ENCODE measurements at regions of chr5 and their contacts with region 1.

Region 1: DNA sequence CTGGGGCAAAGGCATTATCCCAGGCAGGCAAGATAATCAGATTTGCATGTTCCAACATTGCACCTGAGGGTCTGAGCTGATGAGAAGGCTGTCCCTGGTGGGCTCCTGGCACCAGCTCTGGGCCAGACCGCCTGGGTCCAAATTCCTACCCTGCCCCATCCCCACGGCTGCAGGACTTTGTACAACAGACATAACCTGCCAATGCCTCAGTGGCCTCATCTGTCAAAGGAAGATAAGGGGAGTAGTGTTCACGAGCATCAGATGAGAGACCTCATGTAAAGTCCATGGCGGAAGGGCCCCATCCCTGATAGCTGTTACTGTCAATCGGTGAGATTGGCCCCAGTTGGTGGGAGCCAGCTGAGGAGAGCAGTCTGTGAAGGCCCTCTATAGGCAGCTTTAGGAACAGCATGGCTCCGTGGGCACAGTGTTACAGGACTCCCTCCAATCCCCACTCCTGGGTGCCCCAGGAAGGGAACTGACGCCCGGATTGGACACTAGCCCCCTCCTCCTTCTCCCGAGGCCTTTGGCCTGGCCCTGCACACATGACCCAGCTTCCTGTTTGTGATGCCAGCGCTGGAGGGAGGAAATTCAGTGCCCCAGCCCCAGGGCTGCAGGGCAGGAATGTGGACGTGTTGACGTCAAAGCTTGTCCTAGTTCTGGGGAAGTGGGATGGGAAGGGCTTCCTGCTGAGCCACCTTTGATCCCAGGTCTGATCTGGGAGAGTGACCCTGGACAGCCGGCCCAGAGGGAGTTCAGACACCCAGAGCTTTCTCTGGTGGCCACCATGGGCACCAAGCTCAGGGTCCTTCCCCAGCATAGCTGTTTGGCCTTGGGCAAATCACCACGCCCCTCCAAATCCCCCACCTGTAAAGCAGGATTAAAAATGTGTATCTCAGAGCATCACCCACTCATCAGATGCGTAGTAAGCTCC is 56.2 kb downstream of the DUSP1 start:
- DNase-seq: peak; percentile 98 to 99
- ATAC-seq: peak; percentile 82 to 89
- H3K4me3 ChIP-seq: no peak overlapping the region
- H3K27ac ChIP-seq: peak overlapping the region; percentile 98
- H3K4me1 ChIP-seq: peaks cover 45% of the 10 kb centered on the region
- CTCF ChIP-seq: peak; percentile 63
- EP300 ChIP-seq: peak; percentile 99 to 100
- POLR2A ChIP-seq: no peak
- RAD21 ChIP-seq: peak; percentile 59 to 60

Region 2: DNA sequence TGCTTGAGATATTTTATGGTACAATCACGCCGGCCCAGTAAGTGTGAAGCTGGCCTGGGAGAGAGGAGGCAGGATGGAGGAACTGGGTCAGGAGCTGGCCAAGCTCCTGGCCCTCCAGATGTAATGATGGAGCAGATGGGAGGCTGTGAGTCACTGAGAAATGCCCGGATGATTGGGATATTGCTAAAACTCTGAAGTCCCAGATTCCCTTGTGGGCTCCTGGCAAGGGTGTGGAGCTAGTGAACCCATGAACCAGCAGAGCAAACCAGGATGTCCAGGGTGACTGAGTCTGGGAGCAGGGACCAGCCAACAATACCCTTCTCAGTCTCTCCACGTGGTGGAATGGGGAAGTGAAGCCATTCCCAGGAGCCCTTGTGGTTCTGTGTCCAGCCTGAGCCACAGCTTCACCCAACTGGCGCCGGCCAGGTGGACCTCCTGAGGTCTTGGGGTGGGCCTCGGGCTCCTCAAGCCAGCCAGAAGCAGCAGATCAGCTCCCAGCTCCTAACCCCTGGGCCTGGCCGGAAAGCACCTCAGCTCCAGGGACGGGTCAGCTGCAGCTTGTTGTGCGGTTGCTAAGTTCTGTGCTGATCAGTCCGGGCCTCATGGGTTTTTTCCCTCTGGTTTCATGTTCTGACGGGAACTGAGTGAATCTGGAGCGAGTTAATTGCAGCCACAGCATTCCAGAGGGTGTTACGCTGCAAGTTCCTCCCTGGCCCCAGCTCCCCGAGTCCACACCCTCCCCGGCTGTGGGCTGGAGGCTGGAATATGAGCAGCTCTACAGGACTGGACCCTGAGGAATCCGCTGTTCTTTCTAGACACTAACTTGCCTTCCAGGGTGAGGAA is 18.6 kb after region 1 on chr5:
- CTCF ChIA-PET with region 1: interaction called, 34 read pairs
- POLR2A ChIA-PET with region 1: no interaction called
- DNase-seq: no peak
- ATAC-seq: peak; percentile 20 to 61; a peak in 4 of 6 replicates
- H3K4me3 ChIP-seq: no peak overlapping the region
- H3K27ac ChIP-seq: peak overlapping the region; percentile 45 to 78; a peak in 5 of 6 replicates
- H3K4me1 ChIP-seq: peaks cover 30% of the 10 kb centered on the region
- CTCF ChIP-seq: no peak
- EP300 ChIP-seq: no peak
- POLR2A ChIP-seq: no peak
- RAD21 ChIP-seq: no peak

Region 3: DNA sequence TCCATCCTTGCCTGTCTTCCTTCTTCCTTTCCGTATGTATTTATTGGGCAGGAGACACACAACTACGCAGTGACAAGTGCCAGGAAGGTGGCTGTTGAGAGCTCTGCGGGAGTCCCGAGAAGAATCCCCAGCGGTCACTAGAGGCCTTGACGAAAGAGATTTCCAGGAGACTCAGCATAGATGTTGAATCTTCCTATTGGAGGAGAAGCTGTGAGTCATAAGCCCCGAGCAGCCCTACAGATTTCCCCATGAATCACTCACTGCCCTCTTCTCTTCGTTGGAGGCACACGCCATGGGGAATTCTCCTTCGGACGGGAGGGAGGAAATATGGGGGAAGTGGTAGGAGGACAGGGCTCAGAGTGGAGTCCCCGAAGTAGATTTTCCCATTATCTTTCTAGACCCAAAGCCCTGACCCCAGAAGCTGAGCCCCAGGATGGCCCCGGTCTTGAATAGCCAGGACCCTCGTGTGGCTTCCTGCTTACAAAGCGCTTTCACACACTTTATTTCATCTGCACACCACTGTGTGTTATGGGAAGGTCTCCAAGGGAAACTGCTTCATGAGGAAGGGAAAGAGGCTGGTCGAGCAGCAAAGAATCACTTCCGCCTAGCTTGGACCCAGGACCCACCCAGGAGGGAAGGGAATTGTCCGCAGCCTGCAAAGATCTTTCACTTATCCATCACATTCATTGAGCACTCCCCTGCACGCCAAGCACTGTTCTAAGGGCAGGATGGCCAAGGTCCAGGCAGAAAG is 43.5 kb after region 1 on chr5:
- CTCF ChIA-PET with region 1: interaction called, 68 read pairs
- POLR2A ChIA-PET with region 1: interaction called, 6 read pairs
- DNase-seq: peak; percentile 91 to 95
- ATAC-seq: peak; percentile 91 to 93
- H3K4me3 ChIP-seq: no peak overlapping the region
- H3K27ac ChIP-seq: peak overlapping the region; percentile 79 to 88
- H3K4me1 ChIP-seq: peaks cover 17% of the 10 kb centered on the region
- CTCF ChIP-seq: no peak
- EP300 ChIP-seq: no peak
- POLR2A ChIP-seq: no peak
- RAD21 ChIP-seq: no peak; a peak in 1 of 5 replicates

Region 4: DNA sequence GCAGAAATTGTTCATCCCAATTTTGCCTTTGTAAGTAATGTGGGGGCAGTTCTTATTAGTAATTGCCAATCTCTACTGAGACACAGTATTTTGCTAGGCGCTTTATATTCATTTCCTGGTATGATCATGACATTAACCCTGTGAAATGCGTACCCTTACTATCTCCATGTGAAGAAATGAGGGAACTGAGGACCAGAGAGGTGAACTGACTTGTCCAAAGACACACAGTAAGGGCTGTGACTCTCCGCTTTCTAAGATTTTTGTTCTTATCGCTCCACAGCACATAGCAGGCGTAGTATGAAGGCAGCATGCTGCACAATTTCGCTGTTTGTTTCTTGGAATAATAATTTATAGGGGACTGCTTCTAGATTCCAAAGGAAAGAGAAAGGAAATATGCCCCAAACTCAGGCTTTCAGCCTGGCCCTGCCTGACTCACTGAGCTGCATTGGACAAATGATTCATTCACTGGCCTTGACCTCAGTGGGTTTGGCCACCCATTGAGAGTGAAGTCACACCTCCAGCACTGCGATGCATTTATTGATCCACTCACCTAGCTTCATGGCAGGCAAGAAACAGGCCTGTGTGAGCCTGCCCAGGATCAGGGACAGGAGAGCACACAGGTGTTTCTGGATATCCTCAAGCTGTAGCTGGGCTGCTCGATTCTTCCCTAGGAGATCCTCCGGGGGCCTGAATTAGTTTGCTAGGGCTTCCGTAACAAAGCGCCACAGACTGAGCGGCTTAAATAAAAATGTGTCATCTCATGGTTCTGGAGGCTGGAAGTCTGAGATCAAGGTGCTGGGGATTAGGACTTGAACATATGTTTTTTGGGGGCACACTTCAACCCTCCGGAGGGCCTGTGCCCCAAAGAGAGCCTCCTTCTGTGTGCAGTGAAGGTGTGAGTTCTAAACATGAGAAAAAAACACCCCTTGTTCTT is 63.4 kb after region 1 on chr5:
- CTCF ChIA-PET with region 1: interaction called, 38 read pairs
- POLR2A ChIA-PET with region 1: interaction called, 3 read pairs
- DNase-seq: peak in 1 of 2 experiments; percentile 82
- ATAC-seq: peak; percentile 42 to 54
- H3K4me3 ChIP-seq: peak overlapping the region; percentile 16; the same call in 1 of the 3 replicates
- H3K27ac ChIP-seq: peak overlapping the region; percentile 97 to 100
- H3K4me1 ChIP-seq: peaks cover 93% of the 10 kb centered on the region
- CTCF ChIP-seq: no peak
- EP300 ChIP-seq: no peak
- POLR2A ChIP-seq: no peak
- RAD21 ChIP-seq: peak in 1 of 2 experiments; percentile 15; a peak in 1 of 5 replicates

Region 5: GRCh38 chr5:172897481-172898217 is 182.9 kb after region 1 on chr5:
- CTCF ChIA-PET with region 1: interaction called, 55 read pairs
- POLR2A ChIA-PET with region 1: interaction called, 7 read pairs
- DNase-seq: peak; percentile 90 to 96
- ATAC-seq: peak; percentile 55 to 73
- H3K4me3 ChIP-seq: 0 out of 3 replicates have a peak overlapping the region, but pooled peaks have one; percentile 10
- H3K27ac ChIP-seq: peak overlapping the region; percentile 99 to 100
- H3K4me1 ChIP-seq: peaks cover 87% of the 10 kb centered on the region
- CTCF ChIP-seq: no peak
- EP300 ChIP-seq: peak; percentile 99 to 100
- POLR2A ChIP-seq: no peak
- RAD21 ChIP-seq: peak; percentile 8 to 53; a peak in 2 of 5 replicates

Region 6: DNA sequence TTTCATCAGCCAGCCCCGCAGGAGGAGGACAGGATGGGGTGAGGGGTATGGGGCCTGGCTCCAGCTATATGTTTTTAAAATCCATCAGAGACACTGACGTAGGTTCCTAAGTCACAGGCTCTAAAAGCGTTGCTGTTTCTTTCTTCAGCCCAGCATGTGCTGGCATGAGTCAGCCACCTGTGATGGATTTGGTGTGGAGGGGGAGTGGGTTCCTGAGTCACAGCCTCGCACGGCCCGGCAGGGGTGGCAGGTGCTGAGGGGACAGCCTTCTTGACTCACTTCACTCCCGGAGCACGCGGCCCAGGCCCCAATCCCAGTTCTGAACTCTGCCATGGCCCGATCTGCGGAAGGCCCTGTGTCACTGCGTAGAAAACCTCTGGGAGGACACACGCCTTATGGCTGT is 205.7 kb after region 1 on chr5:
- CTCF ChIA-PET with region 1: interaction called, 480 read pairs
- POLR2A ChIA-PET with region 1: interaction called, 5 read pairs
- DNase-seq: peak; percentile 95 to 97
- ATAC-seq: peak; percentile 84 to 87
- H3K4me3 ChIP-seq: no peak overlapping the region
- H3K27ac ChIP-seq: peak overlapping the region; percentile 98 to 100
- H3K4me1 ChIP-seq: peaks cover 68% of the 10 kb centered on the region
- CTCF ChIP-seq: no peak
- EP300 ChIP-seq: peak; percentile 100
- POLR2A ChIP-seq: no peak
- RAD21 ChIP-seq: peak in 1 of 2 experiments; percentile 67; a peak in 2 of 5 replicates

Region 7: DNA sequence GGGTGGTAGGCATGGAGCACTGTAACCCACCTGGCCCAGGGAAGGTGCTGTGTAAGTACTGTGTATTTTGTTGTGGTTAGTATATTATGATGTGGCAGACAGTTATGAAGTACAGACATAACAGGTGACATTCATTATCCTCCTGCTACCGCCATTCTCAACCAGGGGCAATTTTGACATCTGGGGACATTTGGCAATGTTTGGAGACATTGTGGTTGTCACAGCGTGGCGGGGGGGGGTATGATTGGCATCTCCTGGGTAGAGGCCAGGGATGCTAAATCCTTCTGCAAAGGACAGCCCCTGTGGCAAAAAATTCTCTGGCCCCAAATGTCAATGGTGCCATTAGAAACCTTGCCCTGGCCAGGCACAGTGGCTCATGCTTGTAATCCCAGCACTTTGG is 234.7 kb after region 1 on chr5:
- CTCF ChIA-PET with region 1: interaction called, 480 read pairs
- POLR2A ChIA-PET with region 1: interaction called, 6 read pairs
- DNase-seq: no peak
- ATAC-seq: no peak
- H3K4me3 ChIP-seq: no peak overlapping the region
- H3K27ac ChIP-seq: peak overlapping the region in 1 of 2 experiments; percentile 94; a peak in 3 of 6 replicates
- H3K4me1 ChIP-seq: peaks cover 42% of the 10 kb centered on the region
- CTCF ChIP-seq: no peak
- EP300 ChIP-seq: no peak
- POLR2A ChIP-seq: no peak
- RAD21 ChIP-seq: no peak

Measured in A549 (cell line).